ENCODE measurements at regions of chr5 and their contacts with region 1.

Region 1: DNA sequence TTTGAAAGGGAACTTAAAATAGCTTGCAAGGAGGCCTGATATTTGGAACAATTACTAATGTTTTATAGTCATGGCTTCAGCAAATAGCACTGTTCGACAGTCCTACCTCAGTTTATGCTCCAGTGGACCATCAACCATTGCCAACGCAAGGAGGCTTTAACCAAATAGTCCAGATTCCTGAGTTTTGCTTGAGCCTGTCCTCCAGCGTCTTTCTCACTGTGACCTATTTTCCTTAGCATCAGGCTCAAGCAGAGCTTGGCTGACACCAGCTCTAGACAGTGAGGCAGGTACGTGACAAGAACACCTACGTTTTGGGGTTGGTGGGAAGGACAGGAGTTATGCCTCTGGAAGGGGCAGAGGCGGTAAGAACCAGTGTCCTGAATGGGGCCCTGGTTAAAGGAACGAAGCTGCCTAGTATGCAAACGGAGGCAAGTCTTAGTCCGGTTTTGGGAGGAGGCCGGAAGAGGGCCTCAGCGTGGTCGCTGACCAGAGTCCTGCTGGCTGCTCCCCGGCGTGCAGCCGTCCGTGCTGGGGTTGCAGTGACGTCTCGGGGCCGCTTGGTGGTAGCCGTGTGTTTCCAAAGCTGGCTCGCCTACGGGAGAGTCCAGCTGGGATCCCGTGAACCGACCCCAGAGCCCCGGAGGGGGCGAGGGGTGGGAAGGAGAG is 998 bp upstream of the FGF18 start:
- DNase-seq: peak; percentile 71 to 97 (median 79)

Region 2: DNA sequence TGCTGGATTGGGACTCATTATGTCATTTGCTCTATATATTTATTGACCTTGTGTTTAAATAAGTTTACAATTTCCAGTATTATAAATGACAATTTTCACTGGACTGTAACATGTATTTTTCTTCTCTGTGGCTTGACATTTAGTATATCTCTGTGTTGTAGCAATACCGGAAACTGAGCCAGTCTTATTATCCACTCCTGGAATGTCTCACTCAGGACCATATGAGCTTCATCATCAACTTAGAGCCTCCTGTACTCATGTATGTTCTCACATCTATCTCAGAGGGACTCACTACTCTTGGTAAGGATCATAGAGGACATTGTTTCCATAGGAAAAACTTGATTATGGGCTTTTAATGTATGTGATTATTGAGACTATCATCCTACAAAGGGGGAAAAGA is 175.9 kb before region 1 on chr5:
- intact Hi-C with region 1: no loop called
- DNase-seq: no peak

Region 3: GRCh38 chr5:171848911-171849520 is 430.6 kb after region 1 on chr5:
- intact Hi-C with region 1: loop called (anchors 2 kb)
- DNase-seq: no peak

Region 4: GRCh38 chr5:171907725-171908343 is 489.4 kb after region 1 on chr5:
- intact Hi-C with region 1: loop called (anchors 2 kb)
- DNase-seq: peak in 3 of 10 donors; percentile 17 to 33 (median 31)

Region 5: DNA sequence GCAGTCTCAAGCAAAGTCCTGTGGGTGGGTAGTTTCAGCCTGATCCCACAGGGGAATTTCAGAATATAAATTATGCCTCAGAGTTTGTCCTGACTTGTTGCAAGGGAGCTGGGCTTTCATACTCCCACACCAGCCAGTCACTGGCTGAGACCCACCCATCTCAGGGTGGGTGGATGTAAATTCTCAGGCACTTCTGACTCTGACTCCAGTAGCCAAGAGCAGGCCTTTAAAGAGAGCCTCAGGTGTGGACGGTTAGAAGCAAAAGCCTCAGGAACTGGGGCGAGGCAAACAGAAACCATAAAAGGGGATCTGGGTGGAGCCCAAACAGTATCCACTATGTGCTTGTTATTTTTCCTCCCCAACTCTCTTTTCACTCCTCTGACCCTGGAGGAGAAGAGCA is 616.6 kb after region 1 on chr5:
- intact Hi-C with region 1: loop called (anchors 5 kb)
- DNase-seq: no peak

Measured in posterior cingulate gyrus (tissue), 11 donors.